PC-3 (cell line): ENCODE measurements at regions of chr5 and their contacts with region 1.

Region 1: GRCh38 chr5:137292461-137293027 is 206.6 kb downstream of the SPOCK1 start:
- DNase-seq: peak; percentile 86
- ATAC-seq: peak; percentile 69
- H3K4me3 ChIP-seq: peak overlapping the region; percentile 9; the same call in 1 of the 2 replicates
- H3K27ac ChIP-seq: peak overlapping the region; percentile 97
- H3K4me1 ChIP-seq: peaks cover 51% of the 10 kb centered on the region
- H3K27me3 ChIP-seq: no peaks in the 10 kb centered on the region
- CTCF ChIP-seq: no peak

Region 2: GRCh38 chr5:137075163-137075970 is 217.2 kb before region 1 on chr5:
- CTCF ChIA-PET with region 1: no interaction called
- POLR2A ChIA-PET with region 1: interaction called, 3 read pairs
- intact Hi-C with region 1: loop called (anchors 5 kb)
- DNase-seq: peak; percentile 84
- ATAC-seq: peak; percentile 73
- H3K4me3 ChIP-seq: no peak overlapping the region
- H3K27ac ChIP-seq: no peak overlapping the region
- H3K4me1 ChIP-seq: peaks cover 39% of the 10 kb centered on the region
- H3K27me3 ChIP-seq: no peaks in the 10 kb centered on the region
- CTCF ChIP-seq: peak; percentile 79

Region 3: GRCh38 chr5:137282216-137282615 is 10.3 kb before region 1 on chr5:
- CTCF ChIA-PET with region 1: no interaction called
- POLR2A ChIA-PET with region 1: interaction called, 4 read pairs
- intact Hi-C with region 1: loop called (anchors 1 kb)
- DNase-seq: peak; percentile 59
- ATAC-seq: peak; percentile 90
- H3K4me3 ChIP-seq: no peak overlapping the region
- H3K27ac ChIP-seq: no peak overlapping the region
- H3K4me1 ChIP-seq: peaks cover 30% of the 10 kb centered on the region
- H3K27me3 ChIP-seq: no peaks in the 10 kb centered on the region
- CTCF ChIP-seq: no peak

Region 4: DNA sequence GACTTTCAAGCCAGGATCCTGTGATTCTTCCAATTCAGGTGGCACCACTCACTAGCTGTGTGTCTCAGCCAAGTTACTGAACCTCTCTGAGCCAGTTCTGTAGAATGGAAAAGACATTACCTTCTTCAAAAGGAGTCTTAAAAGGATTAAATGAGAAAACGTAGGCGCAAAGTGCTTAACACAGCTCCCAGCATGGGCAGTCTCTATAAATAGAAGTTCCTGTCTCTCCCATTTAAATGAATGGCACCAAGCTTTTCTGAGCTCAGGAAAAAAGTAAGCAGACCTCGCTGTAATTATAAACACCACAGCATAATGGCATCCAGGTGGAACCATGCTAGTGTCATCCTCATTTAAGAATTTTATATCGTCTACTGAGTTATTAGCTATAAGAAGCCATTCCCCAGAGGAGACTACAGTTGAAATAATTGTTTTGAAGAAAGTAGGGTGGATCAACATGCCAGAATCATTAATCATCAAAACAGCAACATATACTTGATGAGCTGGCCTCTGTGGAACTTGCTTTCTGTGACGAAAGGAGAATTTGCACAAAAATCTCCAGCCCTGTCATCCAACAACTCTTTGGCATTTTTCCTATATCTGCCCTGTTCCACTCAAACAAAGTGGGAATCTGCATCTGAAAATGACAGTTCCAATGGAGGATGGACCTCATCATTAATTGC is 17.6 kb after region 1 on chr5:
- CTCF ChIA-PET with region 1: interaction called, 5 read pairs
- POLR2A ChIA-PET with region 1: no interaction called
- intact Hi-C with region 1: loop called (anchors 2 kb)
- DNase-seq: peak; percentile 90
- ATAC-seq: peak; percentile 87
- H3K4me3 ChIP-seq: peak overlapping the region; percentile 28; the same call in 1 of the 2 replicates
- H3K27ac ChIP-seq: peak overlapping the region; percentile 76
- H3K4me1 ChIP-seq: peaks cover 33% of the 10 kb centered on the region
- H3K27me3 ChIP-seq: no peaks in the 10 kb centered on the region
- CTCF ChIP-seq: no peak

Region 5: DNA sequence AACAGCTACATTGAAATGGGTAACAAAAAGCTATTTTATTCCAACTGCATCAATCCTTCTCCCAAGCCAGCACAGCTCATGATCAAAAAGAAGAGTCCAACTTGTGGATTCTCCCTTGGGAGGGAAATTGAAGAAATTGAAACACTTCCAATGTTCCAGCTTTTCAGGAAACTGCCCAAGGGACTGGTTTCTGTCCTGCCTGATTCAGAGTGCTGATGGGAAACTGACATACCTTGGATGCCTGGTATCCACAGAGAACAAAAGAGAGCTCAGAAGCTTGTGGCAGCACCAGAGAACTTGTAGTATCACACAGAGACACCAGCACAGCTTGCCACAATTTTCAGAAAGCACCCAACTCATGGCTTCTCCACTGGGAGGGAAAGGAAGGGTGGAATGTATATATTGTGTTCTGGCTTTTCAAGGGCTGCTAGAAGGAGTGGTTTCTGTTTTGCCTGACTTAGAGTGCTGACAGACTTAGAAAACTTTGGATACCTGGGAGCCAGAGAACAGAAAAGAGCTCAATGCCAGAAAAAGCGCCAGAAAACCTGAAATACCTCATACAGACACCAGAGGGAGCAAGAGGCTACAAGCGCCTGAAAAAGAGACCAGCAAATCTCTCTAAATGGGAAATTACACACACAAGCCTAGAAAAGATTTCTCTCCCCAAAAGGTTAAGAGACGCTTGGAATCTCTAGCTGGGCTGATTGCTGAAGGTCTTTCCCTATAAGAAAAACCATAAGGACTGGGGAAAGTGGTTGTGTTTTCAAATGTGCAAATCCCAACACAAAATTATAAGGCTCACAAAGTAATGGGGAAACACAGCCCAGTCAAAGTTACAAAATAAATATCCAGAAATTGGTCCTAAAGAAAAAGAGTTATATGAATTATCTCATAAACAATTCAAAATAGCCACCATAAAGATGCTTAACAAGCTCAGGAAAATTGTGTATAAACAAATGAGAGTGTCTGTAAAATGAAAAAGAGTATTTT is 27.8 kb after region 1 on chr5:
- CTCF ChIA-PET with region 1: interaction called, 5 read pairs
- POLR2A ChIA-PET with region 1: interaction called, 14 read pairs
- intact Hi-C with region 1: no loop called
- DNase-seq: peak; percentile 69
- ATAC-seq: 0 out of 2 replicates have a peak, but pooled peaks have one; percentile 24
- H3K4me3 ChIP-seq: no peak overlapping the region
- H3K27ac ChIP-seq: no peak overlapping the region
- H3K4me1 ChIP-seq: peaks cover 8% of the 10 kb centered on the region
- H3K27me3 ChIP-seq: no peaks in the 10 kb centered on the region
- CTCF ChIP-seq: peak; percentile 71